ENCODE measurements at regions of chr5 and their contacts with region 1.

Region 1: GRCh38 chr5:82107267-82107666 is 135.4 kb downstream of the ATG10 start:
- DNase-seq: no peak
- H3K4me3 Mint-ChIP-seq: no peak overlapping the region
- H3K27ac Mint-ChIP-seq: no peak overlapping the region
- H3K4me1 Mint-ChIP-seq: peaks cover 4% of the 10 kb centered on the region
- H3K27me3 Mint-ChIP-seq: no peaks in the 10 kb centered on the region

Region 2: DNA sequence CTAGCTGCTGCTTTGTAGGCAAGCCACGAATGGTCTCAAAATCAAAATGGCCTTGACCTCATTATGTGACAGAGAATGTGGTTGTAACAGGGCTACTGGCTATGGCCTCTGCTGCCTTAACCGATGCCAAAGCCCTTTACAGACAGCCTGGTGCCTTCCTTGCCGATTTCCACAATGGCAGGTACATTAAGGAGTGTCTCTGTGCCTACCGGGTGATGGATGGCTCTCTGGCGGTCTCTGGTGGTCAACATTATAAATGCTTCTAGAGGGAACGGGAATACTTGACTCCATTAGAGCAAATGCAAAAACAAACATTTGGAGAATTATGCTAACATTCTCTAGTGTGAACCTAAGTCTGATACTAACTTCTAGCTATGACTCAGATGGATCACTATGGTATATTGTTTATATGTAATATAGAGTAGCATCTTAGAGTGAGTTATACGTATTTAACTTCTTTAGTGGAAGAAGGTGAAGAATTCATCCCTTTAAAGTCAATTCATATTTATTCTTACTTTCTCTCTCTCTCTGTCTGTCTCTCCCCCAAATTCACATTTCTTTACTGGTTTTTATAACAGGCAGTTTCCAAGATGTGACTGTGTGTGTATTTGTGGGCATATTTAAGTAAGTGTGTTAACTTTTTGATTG is 118.4 kb after region 1 on chr5:
- intact Hi-C with region 1: loop called (anchors 5 kb)
- DNase-seq: peak; percentile 90
- H3K4me3 Mint-ChIP-seq: no peak overlapping the region
- H3K27ac Mint-ChIP-seq: no peak overlapping the region
- H3K4me1 Mint-ChIP-seq: peaks cover 3% of the 10 kb centered on the region
- H3K27me3 Mint-ChIP-seq: peaks cover 5% of the 10 kb centered on the region